Activated CD8-positive, alpha-beta T cell treated with anti-CD3 and anti-CD28 coated beads for 36 hours (primary cell): ENCODE measurements at regions of chr3 and their contacts with region 1.

Region 1: GRCh38 chr3:138915503-138916498 is 31.1 kb downstream of the FOXL2 start:
- DNase-seq: peak; percentile 91
- ATAC-seq: peak; percentile 93
- H3K4me3 Mint-ChIP-seq: peak overlapping the region; percentile 80
- H3K27ac Mint-ChIP-seq: peak overlapping the region; percentile 78
- H3K4me1 Mint-ChIP-seq: peaks cover 3% of the 10 kb centered on the region
- H3K27me3 Mint-ChIP-seq: peaks cover 4% of the 10 kb centered on the region
- CTCF ChIP-seq: peak; percentile 90

Region 2: GRCh38 chr3:138479438-138479863 is 436.4 kb before region 1 on chr3:
- CTCF ChIA-PET with region 1: interaction called, 38 read pairs
- POLR2A ChIA-PET with region 1: no interaction called
- intact Hi-C with region 1: loop called (anchors 10 kb)
- DNase-seq: peak; percentile 60
- ATAC-seq: peak; percentile 58
- H3K4me3 Mint-ChIP-seq: no peak overlapping the region
- H3K27ac Mint-ChIP-seq: no peak overlapping the region
- H3K4me1 Mint-ChIP-seq: no peaks in the 10 kb centered on the region
- H3K27me3 Mint-ChIP-seq: no peaks in the 10 kb centered on the region
- CTCF ChIP-seq: peak; percentile 58

Region 3: DNA sequence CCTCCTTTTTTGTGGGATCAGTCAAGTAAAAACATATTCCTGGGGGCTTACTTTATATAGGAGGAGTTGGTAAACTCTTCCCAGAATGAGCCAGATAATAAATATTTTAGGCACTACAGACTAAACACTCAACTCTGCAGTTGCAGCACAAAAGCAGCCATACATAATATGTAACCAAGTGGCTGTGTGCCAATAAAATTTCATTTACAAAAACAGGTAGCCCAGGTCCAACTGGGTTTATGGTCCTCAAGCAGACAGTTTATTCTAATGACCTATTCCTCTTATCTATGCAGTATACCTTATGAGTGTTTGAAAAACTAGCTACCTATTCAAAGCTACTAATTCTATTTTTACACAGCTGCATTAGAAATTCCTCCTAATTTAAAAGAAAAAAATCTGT is 245.4 kb before region 1 on chr3:
- CTCF ChIA-PET with region 1: interaction called, 10 read pairs
- POLR2A ChIA-PET with region 1: no interaction called
- intact Hi-C with region 1: no loop called
- DNase-seq: no peak
- ATAC-seq: no peak
- H3K4me3 Mint-ChIP-seq: no peak overlapping the region
- H3K27ac Mint-ChIP-seq: no peak overlapping the region
- H3K4me1 Mint-ChIP-seq: no peaks in the 10 kb centered on the region
- H3K27me3 Mint-ChIP-seq: no peaks in the 10 kb centered on the region
- CTCF ChIP-seq: no peak

Region 4: DNA sequence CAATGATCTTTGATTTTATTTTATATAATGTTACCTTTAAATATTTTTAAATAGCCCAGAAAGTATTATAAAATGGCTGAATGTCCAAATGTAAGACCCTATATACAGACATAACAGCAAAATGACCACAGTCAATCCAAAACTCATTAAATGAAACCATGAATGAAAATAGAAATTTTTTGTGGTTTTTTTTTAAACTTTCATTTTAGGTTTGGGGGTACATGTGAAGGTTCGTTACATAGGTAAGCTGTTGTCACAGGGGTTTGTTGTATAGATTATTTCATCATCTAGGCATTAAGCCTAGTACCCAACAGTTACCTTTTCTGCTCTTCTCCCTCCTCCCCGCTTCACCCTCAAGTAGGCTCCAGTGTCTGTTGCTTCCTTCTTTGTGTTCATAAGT is 198.5 kb before region 1 on chr3:
- CTCF ChIA-PET with region 1: interaction called, 36 read pairs
- POLR2A ChIA-PET with region 1: interaction called, 5 read pairs
- intact Hi-C with region 1: no loop called
- DNase-seq: no peak
- ATAC-seq: no peak
- H3K4me3 Mint-ChIP-seq: no peak overlapping the region
- H3K27ac Mint-ChIP-seq: no peak overlapping the region
- H3K4me1 Mint-ChIP-seq: peaks cover 10% of the 10 kb centered on the region
- H3K27me3 Mint-ChIP-seq: no peaks in the 10 kb centered on the region
- CTCF ChIP-seq: no peak

Region 5: GRCh38 chr3:138842483-138843188 is 73.2 kb before region 1 on chr3:
- CTCF ChIA-PET with region 1: interaction called, 12 read pairs
- POLR2A ChIA-PET with region 1: no interaction called
- intact Hi-C with region 1: no loop called
- DNase-seq: no peak
- ATAC-seq: no peak
- H3K4me3 Mint-ChIP-seq: no peak overlapping the region
- H3K27ac Mint-ChIP-seq: no peak overlapping the region
- H3K4me1 Mint-ChIP-seq: no peaks in the 10 kb centered on the region
- H3K27me3 Mint-ChIP-seq: no peaks in the 10 kb centered on the region
- CTCF ChIP-seq: no peak

Region 6: DNA sequence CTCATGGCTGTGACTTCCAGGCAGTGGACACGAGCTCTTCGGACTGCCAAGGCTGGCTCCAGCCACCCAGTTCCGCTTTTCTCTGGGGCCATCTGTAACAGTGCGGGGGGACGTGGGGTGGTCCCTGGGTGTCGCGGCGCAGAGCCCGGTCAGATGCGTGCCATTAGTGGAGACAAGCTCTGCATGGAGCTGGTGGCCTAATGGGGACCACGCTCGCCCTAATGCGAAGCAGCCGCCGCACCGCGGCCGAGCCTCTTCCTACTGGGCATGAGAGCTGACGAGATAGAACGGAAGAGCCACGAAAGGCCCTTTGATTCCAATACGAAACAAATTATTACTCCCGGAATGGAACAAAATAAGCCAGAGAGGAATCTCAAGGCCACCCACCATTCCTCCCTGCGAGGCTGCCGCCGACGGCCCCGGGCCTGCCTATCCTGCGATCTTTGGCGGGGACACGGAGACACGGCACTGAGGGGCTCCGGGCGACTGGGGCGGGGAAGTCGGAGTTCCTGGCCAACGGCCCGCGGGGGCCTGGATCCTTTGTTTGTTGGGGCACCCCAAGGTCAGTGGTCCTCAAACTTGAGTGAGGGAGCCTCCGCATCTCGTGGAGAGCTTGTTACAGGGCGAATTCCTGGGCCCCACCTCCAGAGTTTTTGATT is 13.1 kb after region 1 on chr3:
- CTCF ChIA-PET with region 1: interaction called, 118 read pairs
- POLR2A ChIA-PET with region 1: interaction called, 3 read pairs
- intact Hi-C with region 1: no loop called
- DNase-seq: no peak
- ATAC-seq: no peak
- H3K4me3 Mint-ChIP-seq: no peak overlapping the region
- H3K27ac Mint-ChIP-seq: no peak overlapping the region
- H3K4me1 Mint-ChIP-seq: no peaks in the 10 kb centered on the region
- H3K27me3 Mint-ChIP-seq: peaks cover 13% of the 10 kb centered on the region
- CTCF ChIP-seq: no peak